Activated T-helper 1 cell treated with anti-CD3 and anti-CD28 coated beads, Interleukin-12 subunit alpha, Interleukin-12 subunit beta, Interleukin-2, Interleukin-4 antibody, amounts not matched to agents 30 ng/mL and 10 ng/mL and 1 ng/mL, durations not matched to agents 14 hours and 24 hours and 36 hours (primary cell): ENCODE measurements at regions of chr2 and their contacts with region 1.

Region 1: GRCh38 chr2:197889041-197889440 is 84.6 kb downstream of the PLCL1 start:
- DNase-seq: peak; percentile 41
- H3K4me3 Mint-ChIP-seq: peak overlapping the region; percentile 5
- H3K27ac Mint-ChIP-seq: peak overlapping the region; percentile 59
- H3K4me1 Mint-ChIP-seq: peaks cover 53% of the 10 kb centered on the region
- H3K27me3 Mint-ChIP-seq: no peaks in the 10 kb centered on the region

Region 2: GRCh38 chr2:197675711-197676188 is 213.3 kb before region 1 on chr2:
- intact Hi-C with region 1: no loop called
- DNase-seq: no peak
- H3K4me3 Mint-ChIP-seq: no peak overlapping the region
- H3K27ac Mint-ChIP-seq: no peak overlapping the region
- H3K4me1 Mint-ChIP-seq: no peaks in the 10 kb centered on the region
- H3K27me3 Mint-ChIP-seq: peaks cover 10% of the 10 kb centered on the region

Region 3: GRCh38 chr2:197813093-197813787 is 75.8 kb before region 1 on chr2:
- intact Hi-C with region 1: loop called (anchors 2 kb)
- DNase-seq: no peak
- H3K4me3 Mint-ChIP-seq: no peak overlapping the region
- H3K27ac Mint-ChIP-seq: no peak overlapping the region
- H3K4me1 Mint-ChIP-seq: peaks cover 21% of the 10 kb centered on the region
- H3K27me3 Mint-ChIP-seq: no peaks in the 10 kb centered on the region

Region 4: DNA sequence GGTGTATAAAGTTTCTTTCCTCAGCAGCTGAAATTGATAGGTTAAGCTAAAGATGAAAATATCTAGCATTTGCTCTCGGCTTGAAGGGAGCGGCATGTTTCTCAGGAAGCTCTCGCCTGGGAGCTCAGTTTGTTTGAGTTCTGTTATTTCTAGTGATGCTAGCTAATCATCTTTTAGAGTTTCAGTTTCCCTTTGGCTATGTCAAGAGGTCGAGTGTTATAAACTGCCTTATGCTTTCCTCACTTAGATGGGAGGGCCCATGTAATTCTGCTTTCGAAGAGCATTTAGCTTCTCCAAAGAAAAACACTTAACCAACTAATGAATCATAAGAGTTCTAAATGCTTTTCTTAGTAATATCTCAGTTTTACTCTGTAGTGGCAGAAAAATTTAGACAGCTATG is 51.0 kb before region 1 on chr2:
- intact Hi-C with region 1: loop called (anchors 1 kb)
- DNase-seq: peak; percentile 11
- H3K4me3 Mint-ChIP-seq: peak overlapping the region; percentile 54
- H3K27ac Mint-ChIP-seq: peak overlapping the region; percentile 76
- H3K4me1 Mint-ChIP-seq: peaks cover 42% of the 10 kb centered on the region
- H3K27me3 Mint-ChIP-seq: peaks cover 3% of the 10 kb centered on the region

Region 5: GRCh38 chr2:197869501-197870111 is 19.4 kb before region 1 on chr2:
- intact Hi-C with region 1: loop called (anchors 1 kb)
- DNase-seq: no peak
- H3K4me3 Mint-ChIP-seq: peak overlapping the region; percentile 61
- H3K27ac Mint-ChIP-seq: peak overlapping the region; percentile 70
- H3K4me1 Mint-ChIP-seq: peaks cover 51% of the 10 kb centered on the region
- H3K27me3 Mint-ChIP-seq: no peaks in the 10 kb centered on the region

Region 6: DNA sequence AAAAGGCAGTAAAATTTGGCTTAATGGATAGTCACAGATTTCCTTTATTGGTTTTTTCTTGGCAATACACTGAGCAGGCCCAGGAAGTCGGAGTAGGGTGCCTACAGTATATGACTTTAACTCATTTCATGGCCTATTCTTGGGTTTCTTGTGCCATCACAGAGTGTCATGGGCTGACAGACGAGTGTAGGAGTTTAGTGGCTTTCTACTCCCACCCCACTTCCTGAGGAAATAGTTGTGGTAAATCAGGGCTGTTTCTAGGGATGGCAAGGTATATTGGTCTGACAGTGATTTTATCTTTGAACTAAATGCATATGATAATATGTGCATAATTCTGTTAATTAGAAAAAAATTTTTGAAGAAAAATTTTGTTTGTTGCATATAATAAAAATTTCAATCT is 15.4 kb after region 1 on chr2:
- intact Hi-C with region 1: loop called (anchors 1 kb)
- DNase-seq: peak; percentile 6
- H3K4me3 Mint-ChIP-seq: no peak overlapping the region
- H3K27ac Mint-ChIP-seq: no peak overlapping the region
- H3K4me1 Mint-ChIP-seq: peaks cover 5% of the 10 kb centered on the region
- H3K27me3 Mint-ChIP-seq: peaks cover 35% of the 10 kb centered on the region

Region 7: GRCh38 chr2:197934934-197935289 is 45.9 kb after region 1 on chr2:
- intact Hi-C with region 1: loop called (anchors 2 kb)
- DNase-seq: no peak
- H3K4me3 Mint-ChIP-seq: peak overlapping the region; percentile 1
- H3K27ac Mint-ChIP-seq: peak overlapping the region; percentile 23
- H3K4me1 Mint-ChIP-seq: peaks cover 16% of the 10 kb centered on the region
- H3K27me3 Mint-ChIP-seq: peaks cover 3% of the 10 kb centered on the region

Region 8: GRCh38 chr2:198004921-198005829 is 116.1 kb after region 1 on chr2:
- intact Hi-C with region 1: loop called (anchors 2 kb)
- DNase-seq: peak; percentile 30
- H3K4me3 Mint-ChIP-seq: peak overlapping the region; percentile 46
- H3K27ac Mint-ChIP-seq: peak overlapping the region; percentile 76
- H3K4me1 Mint-ChIP-seq: peaks cover 50% of the 10 kb centered on the region
- H3K27me3 Mint-ChIP-seq: no peaks in the 10 kb centered on the region